ENCODE measurements at regions of chr10 and their contacts with region 1.

Region 1: DNA sequence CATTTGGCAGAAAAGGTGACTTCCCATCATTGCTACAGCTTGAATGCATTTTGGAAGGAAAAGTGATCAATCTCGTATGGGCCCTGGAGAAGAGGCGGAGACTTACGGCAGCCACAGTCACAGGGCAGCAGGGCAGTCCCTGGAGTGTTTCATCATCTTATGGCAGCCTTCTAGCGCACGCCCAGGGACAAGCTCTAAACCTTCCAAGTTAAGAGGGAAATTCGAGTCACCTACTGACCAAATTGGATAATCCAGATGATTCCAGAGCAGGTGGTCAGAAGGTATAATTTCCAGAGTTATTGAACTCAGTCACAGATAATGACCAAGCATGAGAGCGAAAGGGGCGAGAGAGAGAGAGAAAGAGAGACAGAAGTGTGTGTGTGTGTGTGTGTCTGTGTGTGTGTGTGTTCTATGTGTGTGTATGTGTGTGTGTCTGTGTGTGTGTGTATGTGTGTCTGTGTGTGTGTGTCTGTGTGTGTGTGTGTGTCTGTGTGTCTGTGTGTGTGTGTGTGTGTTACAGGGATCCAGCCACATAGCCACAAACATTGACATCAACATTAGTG is 123.7 kb upstream of the ADAM12 start:
- DNase-seq: no peak

Region 2: DNA sequence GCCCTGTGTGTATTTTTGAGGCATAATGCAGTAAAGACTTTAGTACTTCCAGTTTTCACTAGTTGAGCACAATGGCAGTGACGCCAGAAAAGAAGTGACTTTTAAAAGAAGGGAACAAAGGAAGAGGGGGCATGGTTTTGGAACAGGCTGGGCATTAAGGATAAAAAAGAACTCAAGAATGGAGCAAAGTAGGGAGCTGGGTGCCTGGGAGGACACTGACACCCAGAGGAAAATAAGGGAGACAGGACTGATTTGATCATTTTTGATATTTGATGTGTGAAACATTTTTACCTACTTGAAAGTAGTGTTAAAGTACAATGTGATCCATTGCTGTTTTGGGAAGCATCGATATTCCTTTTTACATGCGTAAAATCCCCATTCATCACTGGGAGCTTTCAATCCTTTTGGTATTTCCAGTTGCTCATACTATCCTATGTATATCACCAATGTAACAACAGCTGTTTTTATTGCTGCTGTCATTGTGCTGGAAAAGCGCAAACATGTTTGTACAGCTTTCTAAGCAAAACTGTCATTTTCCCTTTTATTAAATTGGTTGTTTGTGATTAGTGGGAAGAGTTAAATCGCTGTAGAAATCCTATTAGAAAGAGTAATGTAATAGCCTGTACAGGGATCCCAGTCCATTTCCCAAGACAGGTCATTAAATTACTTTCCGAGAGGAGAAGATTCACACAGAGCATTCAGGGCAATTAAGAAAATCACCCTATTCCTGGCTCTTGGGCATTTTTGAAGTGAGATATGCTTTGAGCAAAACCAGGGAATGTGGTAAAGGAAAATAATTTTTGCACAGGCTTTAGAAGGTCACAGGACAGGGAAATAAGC is 209.0 kb before region 1 on chr10:
- intact Hi-C with region 1: no loop called
- DNase-seq: no peak

Region 3: DNA sequence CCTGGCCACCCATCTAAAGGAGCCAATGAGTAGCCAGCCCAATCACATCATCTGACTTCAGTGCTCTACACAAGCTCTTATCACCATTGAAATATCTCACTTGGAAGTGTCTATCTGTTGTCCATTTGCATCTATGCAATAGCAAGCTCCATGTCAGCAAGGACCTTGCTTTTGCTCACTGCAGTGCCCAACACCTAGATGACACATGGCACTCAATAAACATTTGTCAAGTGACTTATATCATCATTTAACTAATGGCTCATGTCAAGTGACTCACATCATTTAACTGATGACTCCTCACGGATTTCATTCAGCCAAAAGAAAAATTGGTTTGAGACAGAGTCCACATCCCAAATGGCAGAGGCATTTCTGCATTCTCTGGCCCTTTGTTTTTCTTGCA is 30.8 kb before region 1 on chr10:
- intact Hi-C with region 1: loop called in 1 of 2 experiments (anchors 1 kb)
- DNase-seq: no peak

Region 4: GRCh38 chr10:126536148-126536547 is 24.1 kb after region 1 on chr10:
- intact Hi-C with region 1: loop called in 1 of 2 experiments (anchors 1 kb)
- DNase-seq: no peak